K562 (cell line): ENCODE measurements at regions of chr20 and their contacts with region 1.

Region 1: DNA sequence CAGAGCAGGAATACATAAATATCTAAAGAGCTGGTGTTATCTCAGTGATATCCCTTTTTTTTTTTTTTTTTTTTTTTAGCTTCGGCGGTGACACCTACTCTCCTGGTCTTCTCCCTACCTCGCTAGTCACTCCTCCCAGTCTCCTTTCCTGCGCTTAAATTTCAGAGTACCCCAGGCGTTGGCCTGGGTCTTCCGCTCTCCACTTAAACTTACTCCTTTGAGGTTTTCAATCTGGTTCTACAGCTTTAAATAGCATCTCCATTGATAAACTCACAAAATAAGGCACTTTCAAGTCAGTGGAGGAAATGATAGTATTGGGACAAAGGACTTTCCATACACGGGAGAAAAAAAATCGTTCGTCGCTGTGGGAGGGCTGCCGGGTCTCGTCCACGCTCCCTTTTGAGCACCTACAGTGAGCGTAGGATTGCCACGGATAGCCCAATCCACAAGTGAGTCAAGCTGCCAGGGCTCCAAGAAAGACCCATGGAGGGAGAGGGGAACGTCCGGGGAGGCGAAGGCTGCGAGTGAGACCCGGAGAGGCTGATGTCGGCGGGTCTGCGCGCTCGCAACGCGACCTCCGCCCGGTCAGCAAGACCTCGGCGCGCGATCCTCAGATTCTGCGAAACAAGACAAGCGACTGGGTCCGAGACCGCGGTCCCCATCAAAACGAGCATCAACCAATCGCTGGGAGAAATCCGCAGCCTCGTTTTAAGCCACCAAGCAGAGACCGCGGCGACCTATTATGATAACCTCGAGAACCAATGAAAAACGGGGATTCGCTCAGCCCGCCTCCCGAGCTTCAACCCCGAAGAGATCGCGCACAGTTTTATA is 672 bp upstream of the SRSF6 start:
- DNase-seq: peak; percentile 69 to 94 (median 86)
- ATAC-seq: peak; percentile 86
- H3K4me3 ChIP-seq: peak overlapping the region; percentile 92
- H3K27ac ChIP-seq: peak overlapping the region; percentile 100
- H3K4me1 ChIP-seq: peaks cover 7 to 8% of the 10 kb centered on the region in 2 experiments; a peak in 4 of 5 replicates
- H3K27me3 ChIP-seq: no peaks in the 10 kb centered on the region
- CTCF ChIP-seq: no peak
- EP300 ChIP-seq: no peak
- POLR2A ChIP-seq: no peak
- RAD21 ChIP-seq: no peak

Region 2: DNA sequence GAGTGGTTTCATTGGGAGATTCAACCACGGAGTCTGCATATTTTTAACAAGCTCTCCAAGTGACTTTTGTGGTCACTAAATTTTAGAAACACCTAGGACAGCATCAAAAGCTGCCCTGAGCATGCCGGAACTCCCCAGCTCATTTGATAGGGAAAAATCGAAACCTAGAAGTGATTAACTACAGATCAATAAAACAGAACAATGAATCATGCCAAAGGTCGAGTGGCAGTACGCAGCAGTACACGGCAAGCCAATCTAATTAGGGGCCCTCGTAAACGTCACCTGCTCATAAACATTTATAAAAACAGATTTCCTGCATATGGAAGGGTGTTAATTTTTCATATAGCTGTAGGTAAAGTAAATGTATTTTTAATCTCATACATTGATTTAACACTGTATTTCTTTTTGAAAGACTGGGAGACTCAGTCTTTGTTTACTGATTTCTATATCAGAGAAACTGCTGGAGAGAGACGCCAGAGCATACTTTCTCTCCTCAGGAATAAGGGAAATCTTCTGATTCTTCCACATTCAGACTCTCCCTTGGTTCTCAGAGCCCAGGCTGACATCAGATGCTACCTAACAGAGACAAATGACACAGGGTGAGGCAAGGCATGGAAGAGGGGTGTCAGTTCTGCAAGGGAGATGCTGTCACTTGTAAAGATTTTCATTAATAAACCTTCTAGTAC is 499.9 kb before region 1 on chr20:
- CTCF ChIA-PET with region 1: no interaction called
- POLR2A ChIA-PET with region 1: no interaction called
- in situ Hi-C with region 1: no loop called
- intact Hi-C with region 1: no loop called
- DNase-seq: no peak
- ATAC-seq: no peak
- H3K4me3 ChIP-seq: no peak overlapping the region
- H3K27ac ChIP-seq: no peak overlapping the region
- H3K4me1 ChIP-seq: no peaks in the 10 kb centered on the region
- H3K27me3 ChIP-seq: no peaks in the 10 kb centered on the region
- CTCF ChIP-seq: no peak
- EP300 ChIP-seq: no peak
- POLR2A ChIP-seq: no peak
- RAD21 ChIP-seq: no peak

Region 3: DNA sequence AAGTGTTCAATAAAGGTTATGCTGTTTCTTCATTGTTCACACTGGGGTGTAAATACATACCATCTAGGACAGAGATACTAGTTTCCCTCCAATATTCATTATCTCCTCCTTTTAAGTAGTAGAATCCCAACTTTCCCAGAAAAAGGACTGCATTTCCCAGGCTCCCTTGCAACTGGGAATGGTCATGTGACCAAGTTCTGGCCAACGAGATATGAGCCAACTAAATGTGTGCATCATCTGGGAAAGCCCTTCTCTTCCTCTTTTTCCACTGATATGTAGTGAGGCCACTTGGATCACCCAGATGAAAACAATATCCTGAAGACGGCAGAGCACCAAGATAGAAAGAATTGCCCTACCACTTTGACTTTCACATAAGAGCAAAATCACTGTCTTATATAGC is 169.4 kb before region 1 on chr20:
- CTCF ChIA-PET with region 1: no interaction called
- POLR2A ChIA-PET with region 1: no interaction called
- in situ Hi-C with region 1: no loop called
- intact Hi-C with region 1: no loop called
- DNase-seq: no peak
- ATAC-seq: no peak
- H3K4me3 ChIP-seq: no peak overlapping the region
- H3K27ac ChIP-seq: no peak overlapping the region
- H3K4me1 ChIP-seq: no peaks in the 10 kb centered on the region
- H3K27me3 ChIP-seq: peaks cover 0 to 5% of the 10 kb centered on the region in 2 experiments; a peak in 2 of 5 replicates
- CTCF ChIP-seq: no peak
- EP300 ChIP-seq: no peak
- POLR2A ChIP-seq: no peak
- RAD21 ChIP-seq: no peak

Region 4: DNA sequence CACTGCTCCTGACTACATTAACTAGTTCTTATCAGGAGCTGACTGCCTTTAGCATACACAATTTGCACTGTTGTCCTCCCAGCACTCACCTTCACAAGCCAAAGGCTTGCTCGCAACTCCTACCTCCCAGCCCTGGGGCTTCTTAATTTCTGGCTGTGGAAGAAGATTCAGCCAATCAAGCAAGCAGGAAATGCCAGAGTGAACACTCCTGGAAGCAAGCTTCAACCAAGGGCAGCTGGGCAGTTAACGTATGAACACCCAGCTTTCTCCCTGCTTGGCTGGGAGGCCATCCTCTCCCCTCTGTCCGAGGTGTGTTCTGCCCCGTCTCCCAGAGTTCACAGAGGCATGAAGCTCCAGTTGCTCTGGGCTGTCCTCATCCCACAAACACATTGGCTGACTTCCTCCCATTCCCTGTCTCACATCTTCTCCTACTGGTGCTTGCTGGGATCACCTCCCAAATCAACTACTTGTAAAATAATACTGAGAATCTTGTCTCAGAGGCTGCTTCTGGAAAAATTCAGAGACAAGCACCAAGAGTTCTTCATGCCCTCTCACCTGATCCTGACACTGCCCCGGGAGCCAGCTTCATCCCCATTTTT is 14.6 kb before region 1 on chr20:
- CTCF ChIA-PET with region 1: no interaction called
- POLR2A ChIA-PET with region 1: interaction called, 27 read pairs
- in situ Hi-C with region 1: no loop called
- intact Hi-C with region 1: no loop called
- DNase-seq: no peak
- ATAC-seq: peak; percentile 50
- H3K4me3 ChIP-seq: no peak overlapping the region
- H3K27ac ChIP-seq: no peak overlapping the region
- H3K4me1 ChIP-seq: no peaks in the 10 kb centered on the region; a peak in 2 of 5 replicates
- H3K27me3 ChIP-seq: peaks cover 2 to 11% of the 10 kb centered on the region in 2 experiments; a peak in 3 of 5 replicates
- CTCF ChIP-seq: peak in 2 of 3 experiments; percentile 43 to 48; a peak in 4 of 6 replicates
- EP300 ChIP-seq: no peak
- POLR2A ChIP-seq: no peak
- RAD21 ChIP-seq: peak in 1 of 2 experiments; percentile 41; a peak in 2 of 4 replicates

Region 5: GRCh38 chr20:43490038-43490437 is 33.0 kb after region 1 on chr20:
- CTCF ChIA-PET with region 1: no interaction called
- POLR2A ChIA-PET with region 1: interaction called, 13 read pairs
- in situ Hi-C with region 1: no loop called
- intact Hi-C with region 1: no loop called
- DNase-seq: no peak
- ATAC-seq: no peak
- H3K4me3 ChIP-seq: no peak overlapping the region
- H3K27ac ChIP-seq: no peak overlapping the region
- H3K4me1 ChIP-seq: no peaks in the 10 kb centered on the region
- H3K27me3 ChIP-seq: peaks cover 2 to 5% of the 10 kb centered on the region in 2 experiments; a peak in 4 of 5 replicates
- CTCF ChIP-seq: no peak
- EP300 ChIP-seq: no peak
- POLR2A ChIP-seq: no peak
- RAD21 ChIP-seq: no peak

Region 6: DNA sequence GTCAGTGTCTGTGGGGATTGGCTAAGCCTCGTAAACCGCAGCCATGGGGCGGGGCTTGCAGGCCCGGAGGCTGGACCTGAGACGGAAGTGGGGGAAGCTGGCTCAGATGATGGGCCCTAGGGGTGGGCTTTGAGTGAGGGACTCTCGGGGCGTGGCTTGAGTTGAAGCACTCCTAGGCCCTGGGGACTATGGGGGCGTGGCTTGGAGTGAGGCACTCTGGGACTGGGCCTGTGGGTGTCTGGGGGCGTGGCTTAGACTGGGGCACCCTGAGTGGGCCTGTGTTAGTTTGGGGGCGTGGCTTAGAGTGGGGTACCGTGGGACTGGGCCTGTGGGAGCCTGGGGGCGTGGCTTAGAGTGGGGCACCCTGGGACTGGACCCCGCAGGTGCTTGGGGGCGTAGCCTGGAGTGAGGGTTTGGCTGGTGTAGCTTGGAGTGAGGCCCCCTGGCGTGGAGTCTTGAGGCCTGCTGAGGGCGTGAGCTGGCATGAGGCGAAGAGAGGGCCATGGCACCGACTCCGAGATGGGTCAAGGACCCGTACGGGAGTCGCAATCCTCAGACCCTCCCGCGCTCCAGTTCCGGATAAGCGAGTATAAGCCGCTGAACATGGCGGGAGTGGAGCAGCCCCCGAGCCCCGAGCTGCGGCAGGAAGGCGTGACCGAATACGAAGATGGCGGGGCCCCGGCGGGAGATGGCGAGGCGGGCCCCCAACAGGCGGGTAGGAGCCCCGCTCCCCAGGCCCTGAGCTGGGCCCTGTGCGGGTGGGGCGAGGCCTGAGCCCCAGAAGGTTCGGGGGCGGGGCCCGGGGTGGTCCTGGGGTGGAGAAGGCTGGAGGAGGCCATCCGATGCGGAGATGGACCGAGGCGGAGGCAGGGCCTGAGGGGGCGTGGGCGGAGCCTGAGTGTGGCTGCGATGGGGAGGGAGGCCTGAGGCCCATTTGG is 57.3 kb after region 1 on chr20:
- CTCF ChIA-PET with region 1: no interaction called
- POLR2A ChIA-PET with region 1: interaction called, 19 read pairs
- in situ Hi-C with region 1: no loop called
- intact Hi-C with region 1: loop called (anchors 5 kb)
- DNase-seq: peak; percentile 94 to 96 (median 95)
- ATAC-seq: peak; percentile 90
- H3K4me3 ChIP-seq: peak overlapping the region; percentile 45
- H3K27ac ChIP-seq: peak overlapping the region; percentile 18; the same call in 1 of the 3 replicates
- H3K4me1 ChIP-seq: peaks cover 23 to 34% of the 10 kb centered on the region in 2 experiments; a peak in 4 of 5 replicates
- H3K27me3 ChIP-seq: no peaks in the 10 kb centered on the region
- CTCF ChIP-seq: peak in 2 of 3 experiments; percentile 20; a peak in 3 of 6 replicates
- EP300 ChIP-seq: no peak
- POLR2A ChIP-seq: no peak
- RAD21 ChIP-seq: no peak

Region 7: DNA sequence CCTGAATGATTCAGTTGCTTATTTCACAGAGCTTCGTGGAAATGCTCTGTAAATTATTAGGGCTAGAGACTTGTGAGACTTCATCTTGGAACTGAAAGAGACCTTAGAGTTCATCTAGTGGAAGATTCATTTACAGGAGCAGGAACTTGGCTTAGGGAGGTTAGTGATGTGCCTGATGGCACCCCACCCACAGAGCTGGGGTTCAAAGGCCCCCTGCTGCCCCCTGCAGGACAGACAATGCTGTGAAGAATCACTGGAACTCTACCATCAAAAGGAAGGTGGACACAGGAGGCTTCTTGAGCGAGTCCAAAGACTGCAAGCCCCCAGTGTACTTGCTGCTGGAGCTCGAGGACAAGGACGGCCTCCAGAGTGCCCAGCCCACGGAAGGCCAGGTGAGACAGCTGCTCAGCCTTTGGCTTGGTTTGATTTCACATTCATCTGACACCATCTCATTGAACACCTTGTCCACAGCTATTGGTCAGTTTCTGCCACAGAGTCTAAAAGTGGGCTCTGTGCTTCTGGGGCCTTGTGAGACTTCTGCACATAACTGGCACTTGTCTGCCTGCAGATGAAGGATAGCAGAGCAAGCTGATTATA is 235.0 kb after region 1 on chr20:
- CTCF ChIA-PET with region 1: no interaction called
- POLR2A ChIA-PET with region 1: interaction called, 6 read pairs
- in situ Hi-C with region 1: loop called (anchors 10 kb)
- intact Hi-C with region 1: no loop called
- DNase-seq: peak; percentile 70 to 79 (median 74)
- ATAC-seq: peak; percentile 79
- H3K4me3 ChIP-seq: no peak overlapping the region
- H3K27ac ChIP-seq: no peak overlapping the region
- H3K4me1 ChIP-seq: peaks cover 17 to 18% of the 10 kb centered on the region in 2 experiments; a peak in 4 of 5 replicates
- H3K27me3 ChIP-seq: no peaks in the 10 kb centered on the region
- CTCF ChIP-seq: peak; percentile 79 to 86 (median 79)
- EP300 ChIP-seq: no peak
- POLR2A ChIP-seq: no peak
- RAD21 ChIP-seq: peak; percentile 78 to 81